Sciatic nerve (tissue), 2 donors: ENCODE measurements at regions of chr13 and their contacts with region 1.

Region 1: GRCh38 chr13:106159295-106160195 is 375.9 kb downstream of the EFNB2 start:
- DNase-seq: no peak
- ATAC-seq: peak; percentile 45

Region 2: DNA sequence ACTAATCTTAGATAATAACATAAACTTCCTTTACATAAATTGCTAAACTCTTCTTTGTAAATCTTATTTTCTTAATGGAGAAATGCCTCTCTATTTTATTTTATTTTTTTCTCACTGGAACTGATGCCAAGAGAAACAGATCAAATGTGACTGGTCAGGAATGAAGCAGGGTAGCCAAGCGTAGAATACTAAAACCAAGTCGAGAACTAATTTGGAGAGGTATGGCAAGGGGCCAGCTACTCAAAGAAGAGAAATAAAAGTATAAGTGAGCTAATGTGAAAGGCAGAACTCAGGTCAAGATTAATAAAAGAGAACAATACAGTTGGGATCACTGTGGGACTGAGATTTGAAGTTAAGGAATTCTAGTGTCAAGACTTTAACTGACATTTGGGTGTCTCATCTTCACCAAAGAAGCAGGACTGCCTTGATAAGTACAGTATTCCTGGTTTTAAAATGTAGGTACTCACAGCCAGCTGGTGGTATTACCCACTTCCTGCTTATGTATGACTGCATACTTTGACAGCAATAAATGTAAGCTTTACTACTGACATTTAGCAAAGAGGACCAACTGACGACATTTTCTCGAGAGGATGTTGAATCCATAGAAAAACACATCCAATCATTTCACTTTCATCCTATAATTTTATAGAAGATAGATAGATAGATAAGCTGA is 816.3 kb before region 1 on chr13:
- intact Hi-C with region 1: no loop called
- DNase-seq: no peak
- ATAC-seq: no peak

Region 3: DNA sequence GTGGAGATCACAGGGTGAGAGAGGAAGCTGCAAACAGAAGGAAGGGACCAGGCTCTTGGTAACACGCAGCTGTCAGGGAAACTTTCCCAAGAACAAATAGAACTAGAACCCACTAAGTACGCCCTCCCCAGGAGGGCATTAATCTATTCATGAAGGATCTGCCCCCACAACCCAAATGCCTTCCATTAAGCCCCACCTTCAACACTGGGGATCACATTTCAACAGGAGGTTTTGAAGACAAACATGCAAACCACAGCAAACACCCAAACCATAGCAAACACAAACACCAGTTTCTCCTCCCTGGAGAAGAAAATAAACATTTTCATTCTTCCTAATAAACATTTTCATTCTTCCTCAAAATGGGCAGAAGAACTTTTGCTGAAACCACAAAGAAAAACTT is 46.3 kb after region 1 on chr13:
- intact Hi-C with region 1: loop called (anchors 2 kb)
- DNase-seq: no peak
- ATAC-seq: no peak